Psoas muscle (tissue), 8 donors: ENCODE measurements at regions of chr1 and their contacts with region 1.

Region 1: DNA sequence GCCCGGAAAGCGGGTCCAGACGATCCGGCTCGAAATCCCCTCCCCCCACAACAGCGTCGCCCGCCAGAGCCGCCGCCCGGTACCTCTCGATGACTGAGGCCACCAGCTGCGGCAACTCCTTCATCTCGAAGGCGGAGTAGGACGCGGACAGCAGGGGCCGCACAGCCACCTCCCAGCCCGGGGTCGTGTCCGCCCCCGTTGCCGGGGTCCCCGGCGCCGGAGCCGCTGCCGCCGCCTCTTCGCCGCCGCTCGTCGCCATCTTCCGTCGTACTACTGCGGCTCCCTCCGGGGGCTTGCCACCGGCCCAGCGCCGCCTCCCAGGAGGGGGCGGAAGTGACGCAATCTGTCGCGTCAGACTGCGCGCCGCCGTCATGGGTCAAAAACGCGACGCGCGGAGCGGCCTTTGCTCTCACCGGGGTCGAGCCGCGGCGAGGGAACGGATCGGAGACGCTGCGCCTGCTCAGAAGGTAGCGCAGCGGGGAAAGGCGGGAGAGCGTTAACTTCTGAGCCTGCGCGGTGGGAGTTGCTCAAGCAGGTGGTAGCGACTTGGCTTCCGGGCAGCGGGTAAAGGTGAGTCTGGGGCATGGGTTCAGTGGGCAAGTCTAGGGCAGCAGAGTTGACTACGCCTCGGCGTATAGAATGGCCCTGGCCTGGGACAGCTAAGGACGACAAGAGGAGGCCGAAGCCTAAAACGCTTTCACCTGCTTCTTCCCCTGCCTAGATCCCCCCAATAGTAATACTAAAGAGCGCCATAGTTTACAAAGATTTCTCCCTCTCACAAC is at the start of gene UBR4:
- DNase-seq: peak; percentile 96 to 98
- ATAC-seq: peak; percentile 94 to 97 (median 97)
- H3K4me3 ChIP-seq: peak within 1 kb of the TSS; percentile 72
- H3K27ac ChIP-seq: peak within 1 kb of the TSS; percentile 91
- H3K4me1 ChIP-seq: peaks cover 61% of the 10 kb centered on the region
- H3K27me3 ChIP-seq: no peaks in the 10 kb centered on the region
- CTCF ChIP-seq: no peak
- total RNA-seq, gene UBR4: 109 to 185 (median 128) TPM

Region 2: GRCh38 chr1:19033861-19034680 is 176.1 kb before region 1 on chr1:
- intact Hi-C with region 1: no loop called
- DNase-seq: no peak
- ATAC-seq: no peak
- H3K4me3 ChIP-seq: no peak overlapping the region
- H3K27ac ChIP-seq: no peak overlapping the region
- H3K4me1 ChIP-seq: no peaks in the 10 kb centered on the region
- H3K27me3 ChIP-seq: peaks cover 0 to 8% (median 2%) of the 10 kb centered on the region in 3 donors
- CTCF ChIP-seq: no peak

Region 3: GRCh38 chr1:19240673-19241538 is 30.7 kb after region 1 on chr1:
- intact Hi-C with region 1: loop called in 1 of 2 experiments (anchors 2 kb)
- DNase-seq: peak; percentile 68 to 87
- ATAC-seq: peak; percentile 89 to 95 (median 94)
- H3K4me3 ChIP-seq: peak overlapping the region; percentile 10
- H3K27ac ChIP-seq: peak overlapping the region; percentile 86
- H3K4me1 ChIP-seq: peaks cover 13% of the 10 kb centered on the region
- H3K27me3 ChIP-seq: no peaks in the 10 kb centered on the region
- CTCF ChIP-seq: peak; percentile 98

Region 4: DNA sequence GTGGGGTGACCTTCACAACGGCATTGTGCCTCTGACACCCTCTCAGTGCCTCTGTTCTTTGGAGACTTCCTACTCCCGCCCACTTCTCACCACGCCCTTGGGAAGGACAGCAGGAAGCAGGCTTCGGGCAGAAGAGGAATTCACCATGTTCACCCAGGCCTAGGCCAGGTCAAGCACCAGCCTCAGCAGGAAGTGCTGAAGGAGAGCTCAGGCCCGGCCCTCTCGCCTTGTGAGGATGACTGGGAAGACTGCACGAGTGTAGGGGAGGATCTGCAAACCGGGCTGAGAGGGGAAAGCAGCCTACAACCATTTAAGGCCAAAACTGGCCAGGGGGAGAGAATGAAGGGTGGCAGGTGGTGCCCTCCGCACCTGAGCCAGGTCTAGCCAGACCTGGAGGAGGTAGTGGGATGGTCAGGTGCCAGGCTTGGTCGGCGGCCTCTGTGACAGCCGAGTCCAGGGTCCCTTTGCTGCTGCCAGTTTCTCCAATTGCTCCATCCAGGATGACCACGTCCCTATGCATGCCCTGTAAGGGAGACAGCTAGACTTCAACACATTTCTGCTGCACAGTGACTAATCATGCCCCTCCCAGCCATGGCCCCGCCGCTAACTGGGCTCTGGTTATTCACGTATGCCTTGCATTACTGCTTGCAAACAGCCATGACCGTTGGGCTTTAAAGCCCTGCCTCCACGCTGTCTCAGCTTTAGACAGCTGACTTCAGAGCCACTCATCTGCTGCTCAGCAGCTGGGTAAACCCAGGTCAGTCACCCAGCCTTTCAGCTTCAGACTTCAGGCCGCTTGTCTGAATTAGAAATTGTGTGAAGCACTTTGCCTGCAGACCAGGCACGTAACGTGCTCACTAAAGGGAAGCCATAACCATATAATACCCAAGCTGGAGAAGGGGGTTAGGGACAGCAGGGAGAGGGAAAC is 50.3 kb after region 1 on chr1:
- intact Hi-C with region 1: no loop called
- DNase-seq: no peak
- ATAC-seq: peak; percentile 46 to 62 (median 56)
- H3K4me3 ChIP-seq: no peak overlapping the region
- H3K27ac ChIP-seq: no peak overlapping the region
- H3K4me1 ChIP-seq: no peaks in the 10 kb centered on the region
- H3K27me3 ChIP-seq: no peaks in the 10 kb centered on the region
- CTCF ChIP-seq: no peak